H1 (cell line): ENCODE measurements at regions of chr6 and their contacts with region 1.

Region 1: GRCh38 chr6:151240036-151240685 is 394 bp downstream of the AKAP12 start:
- DNase-seq: peak; percentile 81 to 85
- H3K4me3 ChIP-seq: peak overlapping the region; percentile 61 to 97 (median 92)
- H3K27ac ChIP-seq: peak overlapping the region; percentile 78
- H3K4me1 ChIP-seq: peaks cover 3 to 12% (median 9%) of the 10 kb centered on the region in 4 experiments; a peak in 6 of 7 replicates
- H3K27me3 ChIP-seq: 0 out of 7 replicates have a peak, but pooled peaks cover 0 to 3% (median 0%) of the 10 kb centered on the region in 4 experiments
- CTCF ChIP-seq: peak in 1 of 3 experiments; percentile 24; a peak in 2 of 4 replicates
- EP300 ChIP-seq: no peak
- POLR2A ChIP-seq: peak; percentile 67 to 85
- RAD21 ChIP-seq: peak in 1 of 2 experiments; percentile 33; a peak in 3 of 4 replicates

Region 2: DNA sequence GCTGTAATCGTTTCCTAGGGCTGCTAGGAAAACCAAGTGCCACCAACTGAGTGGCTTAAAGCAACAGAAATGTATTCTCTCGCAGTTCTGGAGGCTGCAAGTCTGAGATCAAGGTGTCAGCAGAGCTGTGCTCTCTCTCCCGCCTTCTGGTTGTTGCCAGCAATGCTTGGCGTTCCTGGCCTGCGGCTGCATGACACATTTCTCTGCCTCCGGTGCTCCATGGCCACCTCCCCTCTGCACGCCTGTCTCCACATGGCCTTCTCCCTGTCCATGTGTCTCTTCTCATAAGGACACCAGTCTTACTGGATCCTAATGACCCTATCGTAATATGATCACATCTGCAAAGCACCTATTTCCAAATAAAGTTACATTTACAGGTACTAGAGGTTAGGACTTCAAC is 92.0 kb before region 1 on chr6:
- CTCF ChIA-PET with region 1: no interaction called
- POLR2A ChIA-PET with region 1: no interaction called
- DNase-seq: no peak
- H3K4me3 ChIP-seq: no peak overlapping the region
- H3K27ac ChIP-seq: no peak overlapping the region
- H3K4me1 ChIP-seq: no peaks in the 10 kb centered on the region
- H3K27me3 ChIP-seq: no peaks in the 10 kb centered on the region
- CTCF ChIP-seq: no peak
- EP300 ChIP-seq: no peak
- POLR2A ChIP-seq: no peak
- RAD21 ChIP-seq: no peak

Region 3: DNA sequence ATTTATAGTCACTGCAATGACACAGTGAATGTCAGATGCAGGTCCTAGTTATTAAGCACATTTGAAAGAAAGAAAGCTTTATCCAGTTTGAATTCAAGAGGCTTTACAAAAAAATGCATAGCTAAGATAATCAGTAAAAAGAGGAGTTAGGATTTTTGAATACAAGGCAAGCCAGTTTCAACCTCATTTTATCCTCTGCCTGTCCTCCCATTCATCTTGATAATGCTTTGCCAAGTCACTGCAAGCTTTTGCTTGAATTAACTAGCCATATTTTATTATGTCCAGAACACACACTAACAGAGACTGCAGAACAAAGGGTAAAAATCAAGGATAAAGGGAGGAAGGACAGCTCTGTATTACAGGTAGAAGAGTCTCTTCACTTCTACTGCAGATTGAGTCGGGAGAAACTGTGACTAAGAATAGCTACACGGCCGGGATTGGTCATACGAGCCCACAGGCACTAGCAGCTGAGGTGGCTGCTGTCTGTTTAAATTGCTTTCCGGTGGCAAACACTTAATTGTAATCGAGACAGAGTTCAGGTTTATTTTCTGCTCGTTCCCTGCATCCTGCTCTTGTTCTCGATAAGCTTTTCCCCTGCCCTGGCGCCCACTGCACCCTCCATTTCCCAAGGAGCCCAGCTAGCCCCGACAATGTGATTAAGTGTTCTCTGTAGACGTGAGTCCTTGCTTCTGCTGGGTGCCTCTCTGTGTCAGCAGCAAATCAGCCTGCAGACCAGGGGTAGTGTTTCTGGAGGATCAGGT is 30.9 kb before region 1 on chr6:
- CTCF ChIA-PET with region 1: no interaction called
- POLR2A ChIA-PET with region 1: no interaction called
- DNase-seq: no peak
- H3K4me3 ChIP-seq: no peak overlapping the region
- H3K27ac ChIP-seq: no peak overlapping the region
- H3K4me1 ChIP-seq: no peaks in the 10 kb centered on the region
- H3K27me3 ChIP-seq: no peaks in the 10 kb centered on the region
- CTCF ChIP-seq: no peak
- EP300 ChIP-seq: no peak
- POLR2A ChIP-seq: no peak
- RAD21 ChIP-seq: no peak

Region 4: DNA sequence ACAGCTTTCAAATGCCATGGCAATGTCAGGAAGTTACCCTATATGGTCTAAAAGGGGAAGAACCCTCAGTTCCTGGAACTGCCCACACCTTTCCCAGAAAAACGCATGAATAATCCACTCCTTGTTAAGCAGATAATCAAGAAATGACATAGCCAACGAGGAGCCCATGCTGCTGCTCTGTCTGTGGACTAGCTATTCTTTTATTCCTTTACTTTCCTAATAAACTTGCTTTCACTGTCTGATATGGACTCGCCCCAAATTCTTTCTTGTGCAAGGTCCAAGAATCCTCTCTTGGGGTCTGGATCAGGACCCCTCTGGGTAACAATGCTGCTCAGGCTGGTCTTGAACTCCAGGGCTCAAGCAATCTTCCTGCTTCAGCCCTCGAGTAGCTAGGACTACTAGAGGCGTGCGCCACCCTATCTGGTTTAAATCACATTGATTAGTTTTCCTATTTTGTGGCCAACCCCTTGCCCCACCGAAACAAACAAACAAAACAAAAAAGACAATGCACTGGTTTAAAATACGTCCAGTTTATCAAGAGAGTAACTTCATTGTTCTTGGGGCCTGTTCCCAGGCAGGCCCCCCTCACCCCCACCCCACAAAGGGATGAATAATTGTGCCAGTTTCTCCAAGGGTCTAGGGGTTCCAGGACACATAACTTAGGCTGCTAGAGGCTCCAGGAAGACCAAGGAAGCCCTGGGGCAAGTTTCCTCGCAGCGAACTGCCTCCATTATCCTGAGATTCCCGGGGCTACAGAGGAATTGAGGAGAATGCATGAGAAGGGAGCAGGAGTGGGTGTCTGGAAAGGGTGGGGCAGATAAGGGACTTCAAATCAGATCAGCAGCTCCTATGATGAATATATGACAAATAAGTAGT is 10.5 kb before region 1 on chr6:
- CTCF ChIA-PET with region 1: no interaction called
- POLR2A ChIA-PET with region 1: interaction called, 42 read pairs
- DNase-seq: no peak
- H3K4me3 ChIP-seq: no peak overlapping the region
- H3K27ac ChIP-seq: no peak overlapping the region
- H3K4me1 ChIP-seq: no peaks in the 10 kb centered on the region
- H3K27me3 ChIP-seq: no peaks in the 10 kb centered on the region
- CTCF ChIP-seq: no peak
- EP300 ChIP-seq: no peak
- POLR2A ChIP-seq: no peak
- RAD21 ChIP-seq: no peak

Region 5: DNA sequence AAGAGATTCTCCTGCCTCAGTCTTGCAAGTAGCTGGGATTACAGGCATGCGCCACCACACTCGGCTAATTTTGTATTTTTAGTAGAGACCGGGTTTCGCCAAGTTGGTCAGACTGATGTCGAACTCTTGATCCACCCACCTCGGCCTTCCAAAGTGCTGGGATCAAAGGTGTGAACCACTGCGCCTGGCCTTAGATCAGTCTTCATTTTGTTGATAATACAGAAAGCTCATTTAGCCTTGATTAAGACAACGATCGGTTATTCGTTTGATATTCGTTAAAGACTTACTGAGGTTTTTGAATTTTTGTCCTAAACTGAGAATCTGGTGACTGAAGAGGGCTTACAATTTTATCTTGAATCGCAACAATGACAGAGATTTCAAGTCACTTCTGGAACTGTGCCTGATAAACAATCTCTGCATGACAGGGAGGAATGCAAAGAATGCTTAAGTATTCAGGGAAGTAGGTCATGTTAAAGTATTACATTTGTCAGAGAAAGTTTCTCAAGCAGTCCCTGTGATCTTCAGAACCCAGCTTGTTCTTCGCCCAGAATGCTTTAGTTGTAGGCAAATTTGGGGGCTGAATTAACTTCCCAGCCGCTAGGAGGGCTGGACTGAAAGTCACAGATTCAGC is 14.4 kb after region 1 on chr6:
- CTCF ChIA-PET with region 1: interaction called, 3 read pairs
- POLR2A ChIA-PET with region 1: interaction called, 24 read pairs
- DNase-seq: no peak
- H3K4me3 ChIP-seq: no peak overlapping the region
- H3K27ac ChIP-seq: no peak overlapping the region
- H3K4me1 ChIP-seq: peaks cover 0 to 4% (median 2%) of the 10 kb centered on the region in 4 experiments; a peak in 4 of 7 replicates
- H3K27me3 ChIP-seq: no peaks in the 10 kb centered on the region
- CTCF ChIP-seq: no peak
- EP300 ChIP-seq: no peak
- POLR2A ChIP-seq: no peak
- RAD21 ChIP-seq: no peak

Region 6: GRCh38 chr6:151263967-151264366 is 23.8 kb after region 1 on chr6:
- CTCF ChIA-PET with region 1: no interaction called
- POLR2A ChIA-PET with region 1: interaction called, 23 read pairs
- DNase-seq: no peak
- H3K4me3 ChIP-seq: no peak overlapping the region
- H3K27ac ChIP-seq: no peak overlapping the region
- H3K4me1 ChIP-seq: peaks cover 0 to 3% (median 0%) of the 10 kb centered on the region in 4 experiments; a peak in 1 of 7 replicates
- H3K27me3 ChIP-seq: no peaks in the 10 kb centered on the region
- CTCF ChIP-seq: no peak
- EP300 ChIP-seq: no peak
- POLR2A ChIP-seq: no peak
- RAD21 ChIP-seq: no peak

Region 7: GRCh38 chr6:151275121-151275520 is 35.0 kb after region 1 on chr6:
- CTCF ChIA-PET with region 1: no interaction called
- POLR2A ChIA-PET with region 1: no interaction called
- DNase-seq: no peak
- H3K4me3 ChIP-seq: no peak overlapping the region
- H3K27ac ChIP-seq: no peak overlapping the region
- H3K4me1 ChIP-seq: peaks cover 0 to 3% (median under 1%) of the 10 kb centered on the region in 4 experiments; a peak in 1 of 7 replicates
- H3K27me3 ChIP-seq: no peaks in the 10 kb centered on the region
- CTCF ChIP-seq: no peak
- EP300 ChIP-seq: no peak
- POLR2A ChIP-seq: no peak
- RAD21 ChIP-seq: no peak